HepG2 (cell line): ENCODE measurements at regions of chr10 and their contacts with region 1.

Region 1: GRCh38 chr10:95864906-95865813 is 42.6 kb upstream of the CC2D2B start:
- DNase-seq: peak; percentile 76
- ATAC-seq: peak; percentile 90
- H3K4me3 ChIP-seq: no peak overlapping the region
- H3K27ac ChIP-seq: peak overlapping the region; percentile 11
- H3K4me1 ChIP-seq: peaks cover 23% of the 10 kb centered on the region
- H3K27me3 ChIP-seq: no peaks in the 10 kb centered on the region
- CTCF ChIP-seq: peak; percentile 86
- EP300 ChIP-seq: no peak
- POLR2A ChIP-seq: no peak
- RAD21 ChIP-seq: peak; percentile 73

Region 2: DNA sequence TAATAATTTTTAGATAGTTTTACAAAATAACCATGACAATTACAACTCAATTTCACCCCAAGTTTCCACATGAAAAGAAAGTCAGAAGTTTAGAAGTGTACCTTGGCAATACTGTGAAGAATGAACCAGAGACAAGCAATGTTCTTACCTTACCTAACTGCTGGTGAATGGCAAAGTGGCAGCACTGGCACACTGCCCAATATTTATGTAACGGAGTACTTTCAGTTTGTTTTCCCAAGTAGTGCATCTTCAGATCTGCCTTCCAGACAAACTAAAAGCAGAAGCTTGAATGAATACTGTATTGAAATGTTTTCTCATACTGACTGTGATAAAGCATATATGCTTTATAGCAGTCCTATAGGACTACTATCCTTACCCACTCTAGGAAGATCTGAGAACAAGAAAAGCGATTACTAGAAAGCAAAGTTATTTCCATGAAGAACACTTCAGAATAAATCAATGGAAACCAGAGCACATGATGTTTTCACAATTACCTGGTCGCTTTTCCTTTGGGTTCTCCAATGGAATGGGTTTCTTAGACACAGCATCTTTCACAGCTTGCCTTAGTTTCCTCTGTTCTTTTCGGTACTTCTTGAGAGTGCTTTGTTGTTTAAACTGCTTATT is 1503.9 kb before region 1 on chr10:
- CTCF ChIA-PET with region 1: no interaction called
- POLR2A ChIA-PET with region 1: no interaction called
- in situ Hi-C with region 1: no loop called
- intact Hi-C with region 1: no loop called
- DNase-seq: peak; percentile 43
- ATAC-seq: no peak
- H3K4me3 ChIP-seq: peak overlapping the region; percentile 74 to 92 (median 77); a peak in 5 of 6 replicates
- H3K27ac ChIP-seq: no peak overlapping the region
- H3K4me1 ChIP-seq: peaks cover 22% of the 10 kb centered on the region
- H3K27me3 ChIP-seq: no peaks in the 10 kb centered on the region; a peak in 2 of 5 replicates
- CTCF ChIP-seq: no peak
- EP300 ChIP-seq: no peak
- POLR2A ChIP-seq: no peak
- RAD21 ChIP-seq: no peak

Region 3: DNA sequence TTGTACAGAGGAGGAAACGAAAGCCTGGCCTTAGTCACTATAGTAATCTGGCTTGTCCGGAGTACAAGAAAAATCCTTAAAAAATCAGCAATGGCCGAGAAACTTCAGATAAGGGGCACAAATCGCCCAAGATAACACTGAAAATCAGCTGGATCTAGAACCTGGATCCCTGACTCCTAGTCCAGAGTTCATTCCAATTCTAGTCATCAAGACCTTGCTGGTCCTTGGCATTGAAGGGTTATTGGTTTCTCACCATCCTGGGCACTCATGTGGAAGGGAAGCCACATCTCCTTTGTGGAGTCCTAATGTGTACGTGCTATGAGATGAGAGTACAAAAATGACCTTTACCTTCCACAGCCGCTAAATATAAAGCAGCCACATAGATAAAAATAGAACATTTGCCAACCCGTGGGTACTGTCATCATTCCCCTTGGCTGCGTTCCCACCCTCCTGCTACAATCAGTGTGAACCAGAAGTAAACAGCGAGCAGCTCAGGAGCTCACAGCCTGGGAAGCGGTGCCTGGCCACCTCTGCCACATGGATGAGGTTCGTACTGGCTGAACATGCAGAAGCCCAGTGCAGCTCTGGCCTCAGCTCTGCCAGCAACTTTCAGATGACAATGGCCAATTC is 458.4 kb before region 1 on chr10:
- CTCF ChIA-PET with region 1: no interaction called
- POLR2A ChIA-PET with region 1: no interaction called
- in situ Hi-C with region 1: loop called (anchors 25 kb)
- intact Hi-C with region 1: no loop called
- DNase-seq: no peak
- ATAC-seq: no peak
- H3K4me3 ChIP-seq: no peak overlapping the region
- H3K27ac ChIP-seq: no peak overlapping the region
- H3K4me1 ChIP-seq: no peaks in the 10 kb centered on the region
- H3K27me3 ChIP-seq: no peaks in the 10 kb centered on the region
- CTCF ChIP-seq: no peak
- EP300 ChIP-seq: no peak
- POLR2A ChIP-seq: no peak
- RAD21 ChIP-seq: no peak

Region 4: DNA sequence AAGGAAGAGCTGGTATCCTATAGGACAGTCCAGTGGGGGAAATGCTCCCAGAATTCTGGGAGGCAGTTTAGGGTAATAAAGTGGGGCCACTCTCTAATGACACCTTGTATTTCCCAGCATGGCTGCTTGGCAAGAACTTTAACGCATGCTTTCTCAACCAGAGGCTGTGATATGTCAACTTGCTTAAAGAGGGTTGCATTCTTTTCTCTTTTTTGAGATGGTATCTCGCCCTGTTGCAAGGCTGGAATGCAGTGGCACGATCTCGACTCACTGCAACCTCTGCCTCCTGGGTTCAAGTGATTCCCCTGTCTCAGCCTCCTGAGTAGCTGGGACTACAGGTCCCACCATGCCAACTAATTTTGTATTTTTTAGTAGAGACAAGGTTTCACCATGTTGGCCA is 247.0 kb before region 1 on chr10:
- CTCF ChIA-PET with region 1: no interaction called
- POLR2A ChIA-PET with region 1: no interaction called
- in situ Hi-C with region 1: no loop called
- intact Hi-C with region 1: no loop called
- DNase-seq: no peak
- ATAC-seq: no peak
- H3K4me3 ChIP-seq: no peak overlapping the region
- H3K27ac ChIP-seq: no peak overlapping the region
- H3K4me1 ChIP-seq: peaks cover 24% of the 10 kb centered on the region
- H3K27me3 ChIP-seq: no peaks in the 10 kb centered on the region
- CTCF ChIP-seq: no peak
- EP300 ChIP-seq: no peak
- POLR2A ChIP-seq: no peak
- RAD21 ChIP-seq: no peak

Region 5: DNA sequence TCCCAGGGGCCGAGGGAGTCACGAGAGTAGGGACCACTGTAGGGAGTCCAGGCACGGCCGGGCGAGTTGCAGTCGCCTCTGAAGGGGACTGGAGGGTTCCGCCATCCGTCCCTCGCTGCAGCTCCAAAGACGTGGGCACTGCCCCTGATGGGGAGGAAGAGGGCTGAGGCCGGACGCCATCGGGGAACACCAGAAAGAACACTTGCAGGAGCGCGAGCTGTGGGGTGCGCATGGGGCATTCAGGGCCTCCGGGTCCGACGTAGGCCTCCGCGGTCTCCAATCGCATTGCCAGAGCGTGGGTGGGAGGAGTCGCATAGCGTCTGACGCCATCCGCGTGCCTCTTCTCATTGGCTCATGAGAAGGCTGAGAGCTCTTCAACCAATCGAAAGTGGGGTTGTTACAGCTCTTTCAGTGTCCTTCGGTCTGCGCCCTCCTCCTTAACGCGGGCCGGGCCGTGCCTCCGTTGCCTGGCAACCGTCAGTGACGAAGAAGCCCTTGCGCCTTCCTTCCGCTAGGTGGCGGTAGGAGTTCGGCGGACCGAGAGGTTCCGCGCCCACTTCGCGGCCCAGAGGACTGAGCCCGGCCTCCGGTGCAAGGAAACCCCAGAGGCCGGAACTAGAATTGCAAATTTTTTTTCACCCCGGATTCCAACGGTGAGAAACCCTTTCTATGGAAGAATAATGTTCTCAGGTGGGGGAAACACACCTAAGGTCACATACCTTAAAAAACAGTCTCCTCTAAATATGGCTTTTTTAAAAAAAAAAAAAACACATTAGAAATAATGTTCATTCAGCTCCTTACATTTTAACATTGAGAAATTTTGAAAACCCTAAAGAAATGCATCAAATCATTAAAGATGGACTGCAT is 171.3 kb before region 1 on chr10 and contains the start of gene TCTN3:
- CTCF ChIA-PET with region 1: interaction called, 41 read pairs
- POLR2A ChIA-PET with region 1: interaction called, 8 read pairs
- in situ Hi-C with region 1: no loop called
- intact Hi-C with region 1: loop called (anchors 1 kb)
- DNase-seq: peak; percentile 99
- ATAC-seq: peak; percentile 99
- H3K4me3 ChIP-seq: peak within 1 kb of the TSS; percentile 76 to 97 (median 83)
- H3K27ac ChIP-seq: peak within 1 kb of the TSS; percentile 72
- H3K4me1 ChIP-seq: peaks cover 34% of the 10 kb centered on the region
- H3K27me3 ChIP-seq: no peaks in the 10 kb centered on the region; a peak in 1 of 5 replicates
- CTCF ChIP-seq: peak; percentile 100
- EP300 ChIP-seq: peak in 1 of 2 experiments; percentile 16; a peak in 1 of 4 replicates
- POLR2A ChIP-seq: peak; percentile 83 to 89
- RAD21 ChIP-seq: peak; percentile 99
- total RNA-seq, gene TCTN3: 42.2 and 60.0 TPM in 2 replicates

Region 6: DNA sequence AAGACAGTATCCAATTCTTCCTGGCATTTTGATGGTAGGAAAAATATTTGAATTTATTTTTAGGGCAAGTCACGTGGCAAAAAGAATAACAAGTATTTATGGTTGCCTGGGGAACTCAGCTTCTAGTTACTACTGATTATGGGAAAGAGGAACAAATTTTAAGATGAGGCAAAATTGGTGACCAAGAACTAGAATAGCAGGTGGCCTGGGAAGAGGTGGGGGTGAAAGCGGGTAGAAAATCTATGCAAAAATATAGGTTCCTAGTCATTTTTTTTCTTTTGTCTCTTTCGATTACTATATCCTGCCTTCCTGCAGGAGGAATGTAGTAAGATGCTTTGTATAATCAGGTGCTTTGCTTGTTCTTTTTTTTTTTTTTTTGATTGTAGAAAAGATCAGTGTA is 81.4 kb before region 1 on chr10:
- CTCF ChIA-PET with region 1: no interaction called
- POLR2A ChIA-PET with region 1: no interaction called
- in situ Hi-C with region 1: no loop called
- intact Hi-C with region 1: no loop called
- DNase-seq: no peak
- ATAC-seq: no peak
- H3K4me3 ChIP-seq: no peak overlapping the region
- H3K27ac ChIP-seq: no peak overlapping the region
- H3K4me1 ChIP-seq: no peaks in the 10 kb centered on the region
- H3K27me3 ChIP-seq: peaks cover 0 to 8% of the 10 kb centered on the region in 2 experiments; a peak in 4 of 5 replicates
- CTCF ChIP-seq: no peak
- EP300 ChIP-seq: no peak
- POLR2A ChIP-seq: no peak
- RAD21 ChIP-seq: no peak

Region 7: GRCh38 chr10:95907456-95908253 is 42.5 kb after region 1 on chr10 and contains the start of gene CC2D2B:
- CTCF ChIA-PET with region 1: no interaction called
- POLR2A ChIA-PET with region 1: interaction called, 11 read pairs
- in situ Hi-C with region 1: no loop called
- intact Hi-C with region 1: loop called (anchors 5 kb)
- DNase-seq: peak; percentile 66
- ATAC-seq: peak; percentile 97
- H3K4me3 ChIP-seq: peak within 1 kb of the TSS; percentile 48 to 77 (median 54)
- H3K27ac ChIP-seq: peak within 1 kb of the TSS; percentile 67
- H3K4me1 ChIP-seq: peaks cover 34% of the 10 kb centered on the region
- H3K27me3 ChIP-seq: no peaks in the 10 kb centered on the region
- CTCF ChIP-seq: peak; percentile 61
- EP300 ChIP-seq: no peak
- POLR2A ChIP-seq: peak in 1 of 2 experiments; percentile 81; a peak in 2 of 4 replicates
- RAD21 ChIP-seq: no peak
- total RNA-seq, gene CC2D2B: 0.20 and 0.22 TPM in 2 replicates

Region 8: DNA sequence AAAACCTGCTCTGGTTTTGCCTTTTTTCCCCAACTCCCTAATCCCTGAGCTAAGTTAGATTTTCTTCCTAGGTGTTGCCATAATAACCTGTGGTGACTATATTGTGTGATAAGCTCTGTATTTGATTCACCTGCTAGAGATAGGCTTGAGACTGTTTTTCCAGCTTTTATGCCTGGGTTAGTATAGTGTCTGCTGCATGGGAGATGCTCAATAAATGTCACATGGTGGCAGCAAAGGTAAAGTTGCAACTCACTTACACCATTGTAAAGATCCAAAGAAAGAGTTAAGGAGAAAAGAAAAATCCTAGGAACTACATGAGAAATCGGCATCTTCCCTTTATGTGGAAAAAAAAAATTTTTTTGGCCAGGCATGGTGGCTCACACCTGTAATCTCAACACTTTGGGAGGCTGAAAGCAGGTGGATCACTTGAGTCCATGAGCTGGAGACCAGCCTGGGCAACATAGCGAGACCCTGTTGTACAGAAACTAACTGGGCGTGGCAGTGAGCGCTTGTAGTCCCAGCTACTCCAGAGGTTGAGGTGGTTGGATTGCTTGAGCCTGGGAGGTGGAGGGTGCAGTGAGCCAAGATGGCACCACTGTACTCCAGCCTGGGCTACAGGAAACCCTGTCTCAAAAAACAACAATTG is 182.0 kb after region 1 on chr10:
- CTCF ChIA-PET with region 1: no interaction called
- POLR2A ChIA-PET with region 1: no interaction called
- in situ Hi-C with region 1: no loop called
- intact Hi-C with region 1: no loop called
- DNase-seq: peak; percentile 12
- ATAC-seq: no peak
- H3K4me3 ChIP-seq: no peak overlapping the region
- H3K27ac ChIP-seq: no peak overlapping the region
- H3K4me1 ChIP-seq: peaks cover 48% of the 10 kb centered on the region
- H3K27me3 ChIP-seq: no peaks in the 10 kb centered on the region; a peak in 1 of 5 replicates
- CTCF ChIP-seq: peak; percentile 69
- EP300 ChIP-seq: no peak
- POLR2A ChIP-seq: no peak
- RAD21 ChIP-seq: peak; percentile 41; the same call in 1 of the 2 replicates